ENCODE measurements at regions of chr20 and their contacts with region 1.

Region 1: GRCh38 chr20:52150440-52151258 is 40.9 kb downstream of the ZFP64 start:
- DNase-seq: no peak

Region 2: DNA sequence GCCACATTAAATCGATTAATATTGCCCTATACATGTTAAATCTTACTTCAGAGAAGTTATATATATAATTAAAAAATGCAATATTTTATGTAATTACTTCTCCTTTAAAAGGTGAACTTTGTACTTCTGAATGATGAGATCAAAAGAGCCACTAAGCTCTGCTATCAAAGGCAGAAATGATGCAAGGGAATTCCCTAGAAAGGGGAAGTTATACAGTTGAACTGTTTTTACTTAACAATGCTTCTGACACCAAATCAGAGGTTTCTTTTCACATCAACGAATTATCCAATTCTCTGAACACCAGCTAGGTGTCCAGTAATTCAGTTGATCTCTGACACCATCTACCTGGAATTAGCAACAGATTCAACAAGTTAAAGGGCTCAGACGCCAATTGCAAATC is 501.6 kb after region 1 on chr20:
- intact Hi-C with region 1: no loop called
- DNase-seq: no peak

Region 3: DNA sequence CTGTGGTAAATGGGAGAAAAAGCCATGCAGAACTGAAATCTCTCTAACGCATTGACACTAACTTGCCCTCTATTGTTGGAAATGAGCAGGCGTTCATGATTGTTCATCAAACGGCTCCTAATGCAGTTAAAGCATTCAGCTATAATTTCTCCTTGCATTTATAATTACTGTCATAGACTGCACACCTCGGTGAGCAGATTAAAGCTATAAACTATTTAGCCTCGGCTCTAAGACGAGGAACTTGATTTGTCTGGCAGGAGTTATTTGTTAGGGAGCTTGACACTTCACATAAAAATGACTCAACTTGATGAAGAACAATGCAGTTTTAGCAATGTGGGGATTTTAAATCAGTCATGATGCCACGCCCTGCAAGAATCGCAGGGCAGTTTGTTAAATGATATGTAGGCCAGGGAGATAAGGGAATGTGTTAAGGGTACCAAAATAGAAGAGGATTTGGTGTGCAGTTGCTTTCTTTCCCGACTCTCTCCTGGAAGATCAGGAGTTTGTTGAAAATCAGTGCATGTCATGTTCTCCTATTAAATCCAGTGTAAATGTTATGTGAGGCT is 1111.7 kb after region 1 on chr20:
- intact Hi-C with region 1: loop called in 1 of 2 experiments (anchors 10 kb)
- DNase-seq: no peak